ENCODE measurements at regions of chr9 and their contacts with region 1.

Region 1: GRCh38 chr9:96020792-96021550 is 145.5 kb downstream of the ERCC6L2 start:
- DNase-seq: peak in 8 of 9 donors; percentile 35 to 70 (median 44)
- ATAC-seq: peak; percentile 70
- H3K4me3 ChIP-seq: peak overlapping the region; percentile 61
- H3K4me3 Mint-ChIP-seq: peak overlapping the region; percentile 71 to 91 (median 86)
- H3K27ac ChIP-seq: peak overlapping the region; percentile 72
- H3K27ac Mint-ChIP-seq: peak overlapping the region; percentile 28 to 97 (median 70)
- H3K4me1 ChIP-seq: peaks cover 27 to 34% of the 10 kb centered on the region in 2 donors
- H3K4me1 Mint-ChIP-seq: peaks cover 47 to 74% (median 63%) of the 10 kb centered on the region in 7 donors
- H3K27me3 ChIP-seq: no peaks in the 10 kb centered on the region
- H3K27me3 Mint-ChIP-seq: peaks cover 0 to 31% (median 5%) of the 10 kb centered on the region in 5 donors

Region 2: DNA sequence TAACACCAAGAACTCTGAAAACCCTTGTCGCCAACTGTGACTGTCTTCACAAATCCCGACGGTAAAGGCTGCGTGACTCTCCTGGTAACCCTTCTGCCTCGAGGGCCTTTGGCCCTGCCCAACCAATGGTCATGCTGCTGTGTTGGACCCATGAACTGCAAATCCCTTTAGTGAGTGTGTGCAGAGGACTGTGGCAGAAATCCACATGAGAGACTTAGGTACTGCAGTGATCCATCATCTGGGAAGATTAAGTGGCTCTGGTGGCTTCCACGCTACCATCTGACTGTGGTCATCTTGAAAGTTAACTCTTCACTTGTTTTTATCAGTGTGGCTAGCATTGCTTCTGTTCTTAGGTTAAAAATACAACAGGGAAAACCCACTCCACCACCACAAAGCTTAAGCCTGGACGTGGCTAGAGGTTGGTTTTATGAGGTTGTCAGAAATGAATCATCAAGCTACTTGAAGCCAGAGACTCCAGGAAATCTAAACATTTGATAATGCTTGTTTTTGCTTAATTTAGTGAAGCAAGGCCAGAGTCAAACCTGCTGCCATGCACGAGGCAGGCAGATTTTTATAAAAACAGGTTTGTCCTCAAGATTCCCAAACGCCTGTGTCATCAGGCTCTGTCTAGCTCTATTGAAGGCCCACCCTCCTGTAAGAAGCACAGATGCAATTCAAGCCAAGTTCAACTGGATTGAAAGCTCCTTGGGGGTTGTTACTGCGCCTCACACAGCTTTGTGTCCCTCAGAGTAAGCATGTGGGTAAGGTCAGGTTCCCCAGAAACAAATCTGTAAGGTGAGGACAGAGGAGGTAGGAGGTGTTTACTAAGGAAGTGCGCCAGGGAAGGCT is 198.2 kb before region 1 on chr9:
- CTCF ChIA-PET with region 1: no interaction called
- POLR2A ChIA-PET with region 1: no interaction called
- intact Hi-C with region 1: loop called in 1 of 2 experiments (anchors 5 kb)
- DNase-seq: peak in 1 of 9 donors; percentile 45
- ATAC-seq: no peak
- H3K4me3 ChIP-seq: no peak overlapping the region
- H3K4me3 Mint-ChIP-seq: peak overlapping the region in 1 of 10 donors; percentile 65
- H3K27ac ChIP-seq: no peak overlapping the region
- H3K27ac Mint-ChIP-seq: peak overlapping the region in 2 of 9 donors; percentile 6 to 70
- H3K4me1 ChIP-seq: no peaks in the 10 kb centered on the region
- H3K4me1 Mint-ChIP-seq: peaks cover 0 to 41% (median 4%) of the 10 kb centered on the region in 7 donors
- H3K27me3 ChIP-seq: no peaks in the 10 kb centered on the region
- H3K27me3 Mint-ChIP-seq: peaks cover 0 to 47% (median 0%) of the 10 kb centered on the region in 5 donors

Region 3: DNA sequence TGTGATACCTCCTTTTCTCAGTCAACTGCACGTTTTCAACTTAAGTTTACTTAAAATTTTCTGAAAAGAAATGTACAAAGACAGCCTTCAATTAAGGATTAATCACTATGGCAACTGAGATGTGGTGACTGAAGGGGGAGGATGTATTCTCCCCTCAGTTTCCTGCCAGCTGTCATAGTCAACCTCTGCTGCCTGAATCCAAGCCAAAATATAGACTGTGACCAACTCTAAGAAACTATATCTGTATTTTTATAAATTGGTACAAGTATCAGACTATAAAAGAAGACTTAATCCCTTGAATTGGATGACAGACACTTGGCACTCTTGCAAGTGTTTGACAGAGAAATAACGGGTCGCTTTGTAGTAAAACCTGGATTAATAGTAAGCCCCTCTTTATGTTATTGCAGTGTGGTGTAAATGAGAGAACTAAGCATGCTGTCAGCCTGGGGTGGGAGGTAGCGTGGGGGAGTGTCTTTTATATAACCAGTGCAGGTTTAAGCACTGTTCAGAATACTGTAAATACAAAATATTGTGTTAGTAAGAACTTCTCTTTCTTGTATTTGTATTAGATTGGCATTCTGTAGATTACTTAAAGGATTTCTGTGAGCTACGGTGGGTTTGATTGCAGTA is 39.1 kb before region 1 on chr9:
- CTCF ChIA-PET with region 1: no interaction called
- POLR2A ChIA-PET with region 1: no interaction called
- intact Hi-C with region 1: loop called in 1 of 2 experiments (anchors 1 kb)
- DNase-seq: peak in 7 of 9 donors; percentile 42 to 76 (median 52)
- ATAC-seq: peak; percentile 94
- H3K4me3 ChIP-seq: no peak overlapping the region
- H3K4me3 Mint-ChIP-seq: peak overlapping the region in 8 of 10 donors; percentile 8 to 68 (median 41)
- H3K27ac ChIP-seq: no peak overlapping the region
- H3K27ac Mint-ChIP-seq: peak overlapping the region; percentile 4 to 84 (median 66)
- H3K4me1 ChIP-seq: peaks cover 0 to 11% of the 10 kb centered on the region in 2 donors
- H3K4me1 Mint-ChIP-seq: peaks cover 14 to 38% (median 25%) of the 10 kb centered on the region in 7 donors
- H3K27me3 ChIP-seq: no peaks in the 10 kb centered on the region
- H3K27me3 Mint-ChIP-seq: no peaks in the 10 kb centered on the region

Region 4: GRCh38 chr9:95999390-95999789 is 21.6 kb before region 1 on chr9:
- CTCF ChIA-PET with region 1: no interaction called
- POLR2A ChIA-PET with region 1: no interaction called
- intact Hi-C with region 1: no loop called
- DNase-seq: no peak
- ATAC-seq: no peak
- H3K4me3 ChIP-seq: no peak overlapping the region
- H3K4me3 Mint-ChIP-seq: no peak overlapping the region
- H3K27ac ChIP-seq: no peak overlapping the region
- H3K27ac Mint-ChIP-seq: peak overlapping the region in 1 of 9 donors; percentile 67
- H3K4me1 ChIP-seq: no peaks in the 10 kb centered on the region
- H3K4me1 Mint-ChIP-seq: peaks cover 0 to 12% (median 4%) of the 10 kb centered on the region in 7 donors
- H3K27me3 ChIP-seq: no peaks in the 10 kb centered on the region
- H3K27me3 Mint-ChIP-seq: no peaks in the 10 kb centered on the region

Region 5: DNA sequence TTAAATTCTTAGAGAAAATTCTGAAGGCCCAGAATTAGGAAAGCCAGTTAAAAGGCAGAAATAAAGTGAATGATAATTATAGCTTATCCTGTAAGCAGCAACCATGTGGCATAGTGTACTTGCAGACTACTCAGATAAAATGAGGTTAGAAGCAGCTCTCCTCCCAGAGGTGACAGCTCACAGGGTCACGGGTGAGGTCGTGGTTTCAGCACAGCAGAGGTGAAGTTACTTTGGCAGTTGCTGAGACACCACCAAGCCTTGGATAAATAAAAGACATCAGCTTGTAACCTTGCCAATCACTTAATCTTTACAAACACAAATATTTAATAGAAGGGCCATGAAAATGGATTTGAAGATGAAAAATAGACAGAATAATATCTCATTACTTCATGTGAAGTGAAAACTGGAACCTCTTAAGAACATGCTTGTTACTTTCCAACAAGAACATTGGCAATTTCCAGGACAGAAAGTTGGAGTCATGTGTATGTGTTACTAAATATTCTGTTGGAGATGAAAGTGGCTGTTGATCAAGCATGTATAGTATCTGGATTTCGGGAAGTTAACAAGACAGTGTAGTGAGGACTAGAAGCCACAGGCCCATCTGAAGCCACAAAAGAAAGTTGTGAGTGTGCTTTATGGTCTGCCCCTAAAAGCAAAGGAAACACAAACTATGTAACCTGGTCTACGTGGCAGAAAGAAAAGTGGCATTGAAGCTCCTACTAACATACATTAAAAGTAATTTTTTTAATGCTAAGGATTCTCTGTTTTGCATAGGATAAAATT is 11.1 kb before region 1 on chr9:
- CTCF ChIA-PET with region 1: no interaction called
- POLR2A ChIA-PET with region 1: interaction called, 4 read pairs
- intact Hi-C with region 1: loop called (anchors 1 kb)
- DNase-seq: peak in 5 of 9 donors; percentile 44 to 68 (median 62)
- ATAC-seq: peak; percentile 83
- H3K4me3 ChIP-seq: no peak overlapping the region
- H3K4me3 Mint-ChIP-seq: peak overlapping the region; percentile 25 to 75 (median 56)
- H3K27ac ChIP-seq: peak overlapping the region; percentile 68
- H3K27ac Mint-ChIP-seq: peak overlapping the region in 8 of 9 donors; percentile 65 to 98 (median 92)
- H3K4me1 ChIP-seq: peaks cover 43 to 57% of the 10 kb centered on the region in 2 donors
- H3K4me1 Mint-ChIP-seq: peaks cover 0 to 55% (median 24%) of the 10 kb centered on the region in 7 donors
- H3K27me3 ChIP-seq: no peaks in the 10 kb centered on the region
- H3K27me3 Mint-ChIP-seq: no peaks in the 10 kb centered on the region

Measured in naive thymus-derived CD4-positive, alpha-beta T cell (primary cell).